MCF 10A (cell line): ENCODE measurements at regions of chr5 and their contacts with region 1.

Region 1: DNA sequence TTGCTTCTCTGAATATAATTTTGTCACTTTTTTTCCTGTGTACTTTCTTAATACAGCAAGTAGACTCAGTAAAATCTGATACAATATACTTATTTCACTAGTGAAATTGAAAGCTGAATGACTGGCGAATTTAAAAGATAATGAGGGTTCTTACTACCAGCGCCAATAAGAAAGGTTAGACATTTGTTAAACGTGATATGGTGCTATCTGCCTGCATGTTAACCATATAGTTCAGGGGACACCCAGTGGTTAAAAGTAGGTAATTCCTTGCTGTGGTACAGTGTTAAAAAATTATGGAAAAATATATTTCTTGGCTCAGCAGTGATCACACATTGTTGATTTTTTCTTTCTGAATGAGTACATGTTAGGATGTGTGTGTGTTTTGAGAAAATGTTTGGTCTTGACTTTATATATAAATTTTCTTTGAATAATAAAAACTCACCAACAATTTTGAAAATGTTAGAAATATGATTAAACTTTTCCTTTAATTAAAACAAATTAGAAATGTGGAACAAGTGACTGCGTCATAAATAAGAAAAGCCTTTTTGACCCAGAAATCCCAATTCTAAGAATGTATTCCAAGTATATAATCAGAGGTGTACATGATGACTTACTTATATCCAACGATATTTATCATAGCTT is 25.8 kb downstream of the CAST start:
- DNase-seq: peak; percentile 66
- H3K4me3 Mint-ChIP-seq: peak overlapping the region; percentile 55
- H3K27ac Mint-ChIP-seq: peak overlapping the region; percentile 4
- H3K4me1 Mint-ChIP-seq: peaks cover 38% of the 10 kb centered on the region
- H3K27me3 Mint-ChIP-seq: no peaks in the 10 kb centered on the region
- CTCF ChIP-seq: peak; percentile 49

Region 2: DNA sequence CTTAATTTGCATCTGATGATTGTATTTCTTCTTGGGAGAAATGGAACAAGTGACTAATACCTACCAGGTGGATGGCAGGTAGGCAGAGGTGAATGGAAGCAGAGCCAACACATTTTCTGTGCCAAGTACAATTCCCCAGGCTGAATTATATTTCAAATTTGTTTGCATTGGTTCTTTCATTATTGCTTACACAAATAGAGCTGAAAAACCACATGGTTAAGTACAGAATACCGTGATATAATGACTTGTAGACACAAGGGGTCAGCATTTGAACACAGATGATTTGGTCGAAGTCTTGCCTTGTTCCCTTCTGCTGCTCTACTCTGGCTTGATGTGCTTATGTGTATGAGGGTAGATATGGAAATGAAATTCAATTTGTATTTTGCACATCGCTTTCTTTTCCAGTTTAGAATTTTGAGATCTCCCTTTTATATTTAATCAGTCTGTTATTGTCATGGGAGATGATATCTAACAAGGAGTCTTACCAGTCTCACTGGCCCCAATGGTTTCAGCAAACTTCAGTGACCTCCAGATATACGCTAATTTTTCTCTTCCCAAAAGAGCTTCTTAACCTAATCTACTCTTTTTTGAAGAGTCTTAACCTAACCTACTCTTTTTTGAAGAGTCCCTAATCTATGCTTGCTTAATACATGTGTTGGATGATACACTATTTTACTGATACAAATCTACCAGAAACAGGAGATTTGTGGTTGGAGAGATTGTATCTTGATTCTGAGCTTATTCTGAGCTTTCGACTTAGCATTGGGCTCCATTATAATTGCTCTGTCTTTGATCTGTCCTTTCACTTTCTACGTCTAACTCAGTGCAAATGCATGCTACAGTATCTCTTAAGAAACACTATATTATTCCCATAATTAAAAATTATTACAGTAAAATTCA is 343.0 kb before region 1 on chr5:
- CTCF ChIA-PET with region 1: interaction called, 10 read pairs
- POLR2A ChIA-PET with region 1: interaction called, 4 read pairs
- intact Hi-C with region 1: loop called (anchors 2 kb)
- DNase-seq: peak; percentile 83
- H3K4me3 Mint-ChIP-seq: no peak overlapping the region
- H3K27ac Mint-ChIP-seq: no peak overlapping the region
- H3K4me1 Mint-ChIP-seq: peaks cover 16% of the 10 kb centered on the region
- H3K27me3 Mint-ChIP-seq: no peaks in the 10 kb centered on the region
- CTCF ChIP-seq: peak; percentile 67

Region 3: GRCh38 chr5:96629774-96630173 is 58.2 kb before region 1 on chr5:
- CTCF ChIA-PET with region 1: interaction called, 15 read pairs
- POLR2A ChIA-PET with region 1: interaction called, 9 read pairs
- intact Hi-C with region 1: no loop called
- DNase-seq: peak; percentile 95
- H3K4me3 Mint-ChIP-seq: peak overlapping the region; percentile 3
- H3K27ac Mint-ChIP-seq: peak overlapping the region; percentile 89
- H3K4me1 Mint-ChIP-seq: peaks cover 31% of the 10 kb centered on the region
- H3K27me3 Mint-ChIP-seq: no peaks in the 10 kb centered on the region
- CTCF ChIP-seq: no peak

Region 4: DNA sequence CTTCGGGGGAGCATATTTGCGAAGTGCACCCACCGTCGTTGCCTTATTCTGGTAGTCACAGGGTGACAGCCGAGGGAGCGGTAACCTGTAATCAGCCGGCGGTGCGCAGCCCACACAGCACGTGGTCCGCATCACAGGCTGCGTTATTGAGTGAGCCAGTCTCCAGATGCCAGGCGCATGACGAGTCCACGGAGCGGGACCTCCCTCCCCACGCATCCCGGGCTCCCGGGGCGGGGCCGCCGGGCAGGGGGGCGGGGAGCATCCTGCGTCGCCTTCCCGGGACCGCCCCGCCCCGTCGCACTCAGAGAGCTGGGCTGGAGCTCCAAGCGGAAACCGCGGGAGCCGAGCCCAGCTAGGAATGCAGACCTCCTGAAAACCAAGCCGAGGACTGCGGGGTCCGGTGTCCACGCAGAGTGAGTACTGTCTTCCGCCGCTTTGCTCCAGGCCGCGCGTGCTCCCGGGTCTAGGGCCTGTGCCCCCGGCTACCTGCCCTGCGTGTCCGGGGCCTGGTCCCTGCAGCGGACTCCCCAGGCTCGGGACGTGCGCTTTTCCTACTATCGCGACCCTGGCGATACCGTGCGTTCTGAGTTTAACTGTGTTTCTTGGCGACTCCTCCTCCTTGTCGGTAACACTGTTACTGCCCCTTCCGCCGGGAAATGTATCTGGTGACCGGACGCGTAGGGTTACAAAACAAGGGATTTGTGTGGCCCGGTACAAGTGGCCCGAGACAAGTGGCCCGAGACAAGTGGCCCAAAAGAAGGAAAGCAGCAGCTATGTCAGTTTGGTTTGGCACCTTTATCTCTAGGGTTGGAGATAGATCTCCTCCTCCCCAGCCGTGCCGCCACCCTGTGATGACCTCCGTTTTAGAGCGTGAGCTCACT is 14.8 kb after region 1 on chr5:
- CTCF ChIA-PET with region 1: interaction called, 24 read pairs
- POLR2A ChIA-PET with region 1: interaction called, 96 read pairs
- intact Hi-C with region 1: no loop called
- DNase-seq: peak; percentile 91
- H3K4me3 Mint-ChIP-seq: peak overlapping the region; percentile 82
- H3K27ac Mint-ChIP-seq: peak overlapping the region; percentile 97
- H3K4me1 Mint-ChIP-seq: peaks cover 56% of the 10 kb centered on the region
- H3K27me3 Mint-ChIP-seq: no peaks in the 10 kb centered on the region
- CTCF ChIP-seq: no peak

Region 5: GRCh38 chr5:96709152-96709821 is 21.4 kb after region 1 on chr5:
- CTCF ChIA-PET with region 1: interaction called, 6 read pairs
- POLR2A ChIA-PET with region 1: interaction called, 96 read pairs
- intact Hi-C with region 1: no loop called
- DNase-seq: peak; percentile 49
- H3K4me3 Mint-ChIP-seq: peak overlapping the region; percentile 8
- H3K27ac Mint-ChIP-seq: peak overlapping the region; percentile 63
- H3K4me1 Mint-ChIP-seq: peaks cover 45% of the 10 kb centered on the region
- H3K27me3 Mint-ChIP-seq: no peaks in the 10 kb centered on the region
- CTCF ChIP-seq: no peak

Region 6: DNA sequence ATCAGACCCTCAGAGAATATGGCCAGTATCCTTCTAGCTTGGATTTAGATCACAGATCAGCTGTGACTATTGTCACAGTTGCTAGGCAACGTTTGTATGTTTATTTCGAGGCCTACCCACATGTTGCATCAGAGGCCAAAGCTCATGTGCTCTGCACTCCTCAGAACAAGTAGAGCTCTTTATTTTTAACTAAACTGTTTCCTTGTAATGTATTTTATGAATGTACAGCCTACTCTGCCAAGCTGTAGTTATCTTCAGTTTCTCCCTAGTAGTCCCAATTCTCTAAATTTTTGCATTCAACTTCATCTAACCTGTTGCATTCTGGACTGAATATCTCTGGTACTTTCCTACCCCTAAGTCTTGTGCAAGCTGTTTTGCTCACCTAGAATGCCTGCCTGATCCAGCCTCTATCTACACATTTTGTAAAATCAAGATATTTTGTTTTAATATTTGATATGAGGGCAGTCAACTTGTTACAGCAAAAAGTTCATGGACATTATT is 27.1 kb after region 1 on chr5:
- CTCF ChIA-PET with region 1: interaction called, 7 read pairs
- POLR2A ChIA-PET with region 1: interaction called, 18 read pairs
- intact Hi-C with region 1: no loop called
- DNase-seq: peak; percentile 74
- H3K4me3 Mint-ChIP-seq: no peak overlapping the region
- H3K27ac Mint-ChIP-seq: peak overlapping the region; percentile 93
- H3K4me1 Mint-ChIP-seq: peaks cover 43% of the 10 kb centered on the region
- H3K27me3 Mint-ChIP-seq: no peaks in the 10 kb centered on the region
- CTCF ChIP-seq: no peak

Region 7: DNA sequence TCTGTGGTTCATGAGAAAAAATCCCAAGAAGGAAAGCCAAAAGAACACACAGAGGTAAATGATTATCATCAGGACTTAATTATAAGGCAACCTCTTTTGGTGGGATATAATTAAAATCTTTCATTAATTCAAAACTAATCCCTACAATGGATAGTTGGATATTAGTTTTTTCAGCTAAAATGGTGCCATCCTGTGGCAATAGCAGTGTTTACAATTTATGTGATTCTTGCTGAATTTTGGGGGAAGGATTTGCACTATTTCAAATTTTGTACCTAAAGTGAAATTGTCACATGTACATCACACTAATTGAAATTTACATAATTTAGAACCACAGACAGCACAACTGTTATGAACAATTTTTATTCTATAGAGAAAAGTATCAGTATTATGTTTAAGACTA is 41.2 kb after region 1 on chr5:
- CTCF ChIA-PET with region 1: interaction called, 5 read pairs
- POLR2A ChIA-PET with region 1: interaction called, 4 read pairs
- intact Hi-C with region 1: loop called (anchors 5 kb)
- DNase-seq: no peak
- H3K4me3 Mint-ChIP-seq: no peak overlapping the region
- H3K27ac Mint-ChIP-seq: no peak overlapping the region
- H3K4me1 Mint-ChIP-seq: peaks cover 12% of the 10 kb centered on the region
- H3K27me3 Mint-ChIP-seq: no peaks in the 10 kb centered on the region
- CTCF ChIP-seq: peak; percentile 34

Region 8: GRCh38 chr5:96997265-96997859 is 309.4 kb after region 1 on chr5:
- CTCF ChIA-PET with region 1: no interaction called
- POLR2A ChIA-PET with region 1: no interaction called
- intact Hi-C with region 1: no loop called
- DNase-seq: peak; percentile 50
- H3K4me3 Mint-ChIP-seq: no peak overlapping the region
- H3K27ac Mint-ChIP-seq: no peak overlapping the region
- H3K4me1 Mint-ChIP-seq: no peaks in the 10 kb centered on the region
- H3K27me3 Mint-ChIP-seq: no peaks in the 10 kb centered on the region
- CTCF ChIP-seq: peak; percentile 36